PC-9 (cell line): ENCODE measurements at regions of chr2 and their contacts with region 1.

Region 1: GRCh38 chr2:110677530-110678456 is at the start of gene BUB1:
- DNase-seq: peak; percentile 90 to 95
- H3K4me3 ChIP-seq: peak within 1 kb of the TSS; percentile 78
- H3K27ac ChIP-seq: peak within 1 kb of the TSS; percentile 90
- H3K4me1 ChIP-seq: peaks cover 35% of the 10 kb centered on the region
- H3K27me3 ChIP-seq: no peaks in the 10 kb centered on the region
- CTCF ChIP-seq: no peak
- total RNA-seq, gene BUB1: 45.7 and 74.6 TPM in 2 replicates

Region 2: GRCh38 chr2:110755491-110756078 is 77.8 kb after region 1 on chr2:
- CTCF ChIA-PET with region 1: interaction called, 15 read pairs
- POLR2A ChIA-PET with region 1: no interaction called
- intact Hi-C with region 1: no loop called
- DNase-seq: no peak
- H3K4me3 ChIP-seq: no peak overlapping the region
- H3K27ac ChIP-seq: no peak overlapping the region
- H3K4me1 ChIP-seq: no peaks in the 10 kb centered on the region
- H3K27me3 ChIP-seq: no peaks in the 10 kb centered on the region
- CTCF ChIP-seq: peak; percentile 82

Region 3: GRCh38 chr2:112481050-112481527 is 1803.3 kb after region 1 on chr2:
- CTCF ChIA-PET with region 1: no interaction called
- POLR2A ChIA-PET with region 1: no interaction called
- intact Hi-C with region 1: no loop called
- DNase-seq: peak; percentile 74 to 77
- H3K4me3 ChIP-seq: peak overlapping the region; percentile 74
- H3K27ac ChIP-seq: peak overlapping the region; percentile 28; the same call in 1 of the 2 replicates
- H3K4me1 ChIP-seq: peaks cover 15% of the 10 kb centered on the region
- H3K27me3 ChIP-seq: no peaks in the 10 kb centered on the region
- CTCF ChIP-seq: peak; percentile 62